T-cell (primary cell): ENCODE measurements at regions of chr17 and their contacts with region 1.

Region 1: GRCh38 chr17:64020056-64020766 is at the start of gene ICAM2:
- DNase-seq: peak; percentile 71 to 97 (median 94)
- ATAC-seq: peak; percentile 79 to 86 (median 85)
- H3K4me3 ChIP-seq: peak within 1 kb of the TSS; percentile 92 to 96
- H3K4me3 Mint-ChIP-seq: peak within 1 kb of the TSS; percentile 93 to 100 (median 97)
- H3K27ac ChIP-seq: peak within 1 kb of the TSS; percentile 100
- H3K27ac Mint-ChIP-seq: peak within 1 kb of the TSS; percentile 96 to 100
- H3K4me1 ChIP-seq: peaks cover 50 to 71% of the 10 kb centered on the region in 2 experiments
- H3K4me1 Mint-ChIP-seq: peaks cover 71 to 83% (median 72%) of the 10 kb centered on the region in 3 donors
- H3K27me3 ChIP-seq: no peaks in the 10 kb centered on the region
- H3K27me3 Mint-ChIP-seq: no peaks in the 10 kb centered on the region
- total RNA-seq, gene ICAM2: 69.6 to 132 (median 116) TPM

Region 2: DNA sequence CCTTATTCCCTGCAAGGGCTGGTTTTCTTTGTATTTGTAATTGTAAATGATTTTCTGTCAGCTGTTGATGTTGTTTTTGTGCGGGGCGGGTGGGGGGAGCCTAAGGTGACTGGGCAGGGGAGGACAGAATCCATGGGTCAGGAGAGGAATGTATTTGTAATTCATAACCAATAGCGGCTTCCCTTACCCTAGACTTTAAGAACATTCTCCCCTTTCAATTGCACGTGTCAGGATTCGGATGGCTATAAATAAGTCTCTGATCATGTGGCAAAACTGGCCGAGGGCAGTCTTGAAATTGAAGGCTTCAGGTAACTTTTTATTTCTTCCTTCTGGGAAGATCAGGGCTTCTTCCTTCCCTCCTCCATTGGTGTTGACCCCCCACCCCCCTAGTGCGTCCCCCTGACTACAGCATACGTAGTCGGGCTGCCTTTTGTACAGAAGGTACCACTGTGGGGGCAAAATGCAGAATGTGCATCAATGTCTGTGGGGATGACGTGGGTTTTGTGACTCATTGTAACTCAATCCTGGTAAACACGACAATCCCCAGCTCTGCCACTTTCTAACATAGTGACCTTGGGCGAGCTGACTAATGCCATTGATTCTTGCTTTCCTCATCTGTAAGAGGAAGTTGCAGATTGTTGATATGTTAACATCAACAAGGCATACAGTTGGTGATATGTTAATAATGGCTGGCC is 1228.3 kb before region 1 on chr17:
- CTCF ChIA-PET with region 1: no interaction called
- POLR2A ChIA-PET with region 1: no interaction called
- DNase-seq: no peak
- ATAC-seq: no peak
- H3K4me3 ChIP-seq: no peak overlapping the region
- H3K4me3 Mint-ChIP-seq: no peak overlapping the region
- H3K27ac ChIP-seq: no peak overlapping the region
- H3K27ac Mint-ChIP-seq: no peak overlapping the region
- H3K4me1 ChIP-seq: peaks cover 0 to 5% of the 10 kb centered on the region in 2 experiments
- H3K4me1 Mint-ChIP-seq: peaks cover 14 to 16% (median 15%) of the 10 kb centered on the region in 3 donors
- H3K27me3 ChIP-seq: peaks cover 0 to 7% of the 10 kb centered on the region in 2 experiments
- H3K27me3 Mint-ChIP-seq: peaks cover 4 to 8% of the 10 kb centered on the region in 2 donors

Region 3: DNA sequence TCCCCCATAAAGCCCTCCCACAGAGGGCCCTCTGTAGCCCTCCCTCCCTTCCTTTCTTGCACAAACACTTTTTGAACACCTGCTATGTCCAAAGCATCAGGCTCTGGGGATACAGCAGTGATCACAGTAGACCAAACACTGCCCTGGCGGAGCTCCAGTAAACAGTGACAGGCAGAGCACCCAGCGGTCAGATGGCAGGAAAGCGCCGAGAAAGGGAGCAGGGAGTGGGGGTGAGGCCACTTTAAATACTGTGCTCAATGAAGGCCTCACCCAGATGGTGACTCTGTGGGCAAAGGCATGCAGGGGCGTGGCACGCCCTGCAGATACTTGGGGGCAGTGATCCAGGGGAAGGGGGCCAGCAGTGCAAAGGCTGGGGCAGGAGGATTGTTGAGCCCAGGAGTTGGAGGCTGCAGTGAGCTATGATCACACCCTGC is 14.5 kb before region 1 on chr17:
- CTCF ChIA-PET with region 1: interaction called, 5 to 10 read pairs
- POLR2A ChIA-PET with region 1: interaction called, 4 read pairs
- DNase-seq: no peak
- ATAC-seq: no peak
- H3K4me3 ChIP-seq: no peak overlapping the region
- H3K4me3 Mint-ChIP-seq: no peak overlapping the region
- H3K27ac ChIP-seq: no peak overlapping the region
- H3K27ac Mint-ChIP-seq: peak overlapping the region; percentile 28 to 60
- H3K4me1 ChIP-seq: peaks cover 6 to 38% of the 10 kb centered on the region in 2 experiments
- H3K4me1 Mint-ChIP-seq: peaks cover 41 to 58% (median 54%) of the 10 kb centered on the region in 3 donors
- H3K27me3 ChIP-seq: no peaks in the 10 kb centered on the region
- H3K27me3 Mint-ChIP-seq: no peaks in the 10 kb centered on the region